PC-3 (cell line): ENCODE measurements at regions of chr18 and their contacts with region 1.

Region 1: DNA sequence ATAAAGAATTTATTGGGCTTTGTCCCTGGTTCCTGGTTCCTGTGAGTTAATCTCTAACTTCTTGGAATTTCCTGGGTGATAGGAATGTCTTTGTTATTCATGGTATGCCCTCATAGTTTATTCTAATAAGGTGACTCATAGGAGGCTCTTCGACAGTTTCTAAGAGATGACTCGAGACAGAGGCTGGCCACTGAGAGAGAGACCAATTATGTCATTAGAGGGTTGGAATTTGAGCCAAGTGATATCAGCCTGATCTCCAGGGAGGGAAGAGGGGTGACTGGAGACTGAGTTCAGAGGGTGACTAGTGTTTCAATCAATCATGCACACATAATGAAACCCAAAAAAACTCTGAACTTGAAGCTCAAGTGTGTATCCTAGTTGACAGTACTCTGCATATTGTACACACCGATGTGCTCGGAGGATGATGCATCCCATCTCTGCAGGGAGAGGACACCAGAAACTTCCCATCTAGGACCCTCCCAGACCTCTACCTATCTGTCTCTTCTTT is 185.7 kb downstream of the MTCL1 start:
- DNase-seq: peak; percentile 99
- ATAC-seq: peak; percentile 99
- H3K4me3 ChIP-seq: peak overlapping the region; percentile 4; the same call in 1 of the 2 replicates
- H3K27ac ChIP-seq: peak overlapping the region; percentile 78
- H3K4me1 ChIP-seq: peaks cover 28% of the 10 kb centered on the region
- H3K27me3 ChIP-seq: no peaks in the 10 kb centered on the region
- CTCF ChIP-seq: no peak

Region 2: DNA sequence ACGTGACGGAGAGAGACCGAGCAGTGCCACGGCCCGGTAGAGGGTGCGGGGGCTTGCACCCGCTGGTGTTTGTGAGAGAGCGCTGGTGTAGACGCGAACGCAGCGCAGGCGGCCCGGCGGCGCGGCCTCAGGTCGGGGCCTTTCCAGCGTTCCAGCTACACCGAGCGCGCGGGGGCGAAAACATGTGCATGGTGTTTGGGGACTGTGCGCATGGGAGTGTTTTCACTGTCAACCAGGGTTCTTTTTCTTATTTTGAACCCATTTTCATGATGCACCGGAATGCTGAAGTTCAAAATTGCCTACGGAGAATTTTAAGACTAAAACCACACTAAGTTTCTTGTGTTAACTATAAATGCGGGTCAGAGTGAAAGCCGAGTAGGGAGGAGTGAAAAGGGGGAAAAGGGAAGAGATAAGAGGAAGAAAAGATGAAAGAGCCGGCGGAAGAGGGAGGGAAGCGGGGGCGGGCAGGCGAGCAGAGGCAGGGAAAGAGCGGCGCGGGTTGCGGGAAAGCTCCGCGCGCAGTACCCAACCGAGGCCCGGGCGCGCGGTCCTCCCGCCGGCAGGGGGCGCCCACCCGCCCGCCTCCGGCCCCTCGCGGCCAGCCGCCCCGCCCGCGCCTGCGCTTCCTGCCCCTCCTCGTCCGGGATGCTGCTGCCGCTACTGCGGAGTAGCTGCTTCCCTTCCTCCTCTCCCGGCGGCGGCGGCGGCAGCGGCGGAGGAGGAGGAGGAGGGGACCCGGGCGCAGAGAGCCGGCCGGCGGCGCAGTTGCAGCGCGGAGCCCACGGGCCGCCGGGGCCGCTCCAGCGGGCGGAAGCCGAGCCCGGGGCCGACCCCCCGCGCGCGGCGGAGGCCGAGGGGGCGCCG is 282.0 kb before region 1 on chr18 and contains the start of gene RAB12:
- CTCF ChIA-PET with region 1: no interaction called
- POLR2A ChIA-PET with region 1: interaction called, 26 read pairs
- intact Hi-C with region 1: no loop called
- DNase-seq: peak; percentile 82
- ATAC-seq: peak; percentile 88
- H3K4me3 ChIP-seq: peak within 1 kb of the TSS; percentile 88
- H3K27ac ChIP-seq: no peak within 1 kb of the TSS
- H3K4me1 ChIP-seq: peaks cover 23% of the 10 kb centered on the region
- H3K27me3 ChIP-seq: no peaks in the 10 kb centered on the region
- CTCF ChIP-seq: peak; percentile 43; the same call in 1 of the 2 replicates
- total RNA-seq, gene RAB12: 50.9 and 54.9 TPM in 2 replicates

Region 3: GRCh38 chr18:8948471-8949149 is 57.6 kb after region 1 on chr18:
- CTCF ChIA-PET with region 1: no interaction called
- POLR2A ChIA-PET with region 1: no interaction called
- intact Hi-C with region 1: loop called (anchors 2 kb)
- DNase-seq: peak; percentile 93
- ATAC-seq: peak; percentile 82
- H3K4me3 ChIP-seq: peak overlapping the region; percentile 44
- H3K27ac ChIP-seq: peak overlapping the region; percentile 50
- H3K4me1 ChIP-seq: peaks cover 71% of the 10 kb centered on the region
- H3K27me3 ChIP-seq: no peaks in the 10 kb centered on the region
- CTCF ChIP-seq: no peak